Activated CD4-positive, alpha-beta T cell treated with anti-CD3 and anti-CD28 coated beads for 36 hours (primary cell): ENCODE measurements at regions of chr12 and their contacts with region 1.

Region 1: GRCh38 chr12:57031138-57031725 is 14.9 kb upstream of the TAC3 start:
- DNase-seq: peak; percentile 44
- ATAC-seq: peak; percentile 43
- H3K4me3 Mint-ChIP-seq: no peak overlapping the region
- H3K27ac Mint-ChIP-seq: peak overlapping the region; percentile 55
- H3K4me1 Mint-ChIP-seq: peaks cover 46% of the 10 kb centered on the region
- H3K27me3 Mint-ChIP-seq: no peaks in the 10 kb centered on the region

Region 2: DNA sequence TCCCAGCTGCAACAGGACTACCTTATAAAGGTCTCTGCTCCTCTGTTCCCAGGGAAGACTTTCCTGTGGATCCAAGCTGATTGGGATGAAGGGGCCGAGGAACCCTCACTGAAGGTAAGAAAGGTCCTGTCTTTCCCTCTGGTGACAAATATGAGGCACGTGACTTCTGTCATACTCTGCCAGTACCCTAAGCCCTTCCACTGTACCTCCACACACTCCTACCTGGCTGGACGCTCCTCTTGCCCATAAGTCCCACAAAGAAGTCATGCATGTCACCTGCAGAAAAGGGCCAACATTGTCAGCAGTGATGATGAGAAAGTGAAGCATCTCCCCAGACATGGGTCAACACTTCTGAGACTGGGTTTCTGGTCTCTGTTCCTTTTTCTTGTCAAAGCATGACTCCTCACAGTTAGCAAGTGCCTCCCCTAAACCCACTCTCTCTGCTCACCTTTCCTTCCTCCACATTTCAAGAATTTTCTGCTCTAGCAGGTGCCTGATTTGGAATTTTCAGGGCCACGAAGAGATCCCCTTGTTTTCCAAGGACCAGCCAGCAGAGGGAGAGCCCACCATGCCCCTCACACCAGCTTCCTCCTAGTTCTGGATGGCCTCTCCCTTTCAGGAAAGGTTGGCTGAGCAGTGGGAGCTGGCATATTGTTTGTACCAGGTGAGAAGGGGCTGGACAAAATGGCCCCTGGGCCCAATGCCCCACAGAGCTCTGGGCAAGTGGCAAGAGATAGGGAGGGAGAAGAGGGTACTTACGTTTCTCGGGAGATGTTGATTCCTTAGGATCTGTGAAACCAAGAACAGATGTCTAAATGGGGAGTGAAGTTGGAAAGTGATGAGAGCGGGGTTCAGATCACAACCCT is 18.4 kb before region 1 on chr12:
- CTCF ChIA-PET with region 1: interaction called, 12 read pairs
- POLR2A ChIA-PET with region 1: no interaction called
- intact Hi-C with region 1: no loop called
- DNase-seq: no peak
- ATAC-seq: no peak
- H3K4me3 Mint-ChIP-seq: no peak overlapping the region
- H3K27ac Mint-ChIP-seq: peak overlapping the region; percentile 56
- H3K4me1 Mint-ChIP-seq: peaks cover 41% of the 10 kb centered on the region
- H3K27me3 Mint-ChIP-seq: no peaks in the 10 kb centered on the region

Region 3: GRCh38 chr12:57019983-57020719 is 11.1 kb before region 1 on chr12:
- CTCF ChIA-PET with region 1: interaction called, 10 read pairs
- POLR2A ChIA-PET with region 1: interaction called, 3 read pairs
- intact Hi-C with region 1: no loop called
- DNase-seq: no peak
- ATAC-seq: no peak
- H3K4me3 Mint-ChIP-seq: no peak overlapping the region
- H3K27ac Mint-ChIP-seq: peak overlapping the region; percentile 60
- H3K4me1 Mint-ChIP-seq: peaks cover 18% of the 10 kb centered on the region
- H3K27me3 Mint-ChIP-seq: no peaks in the 10 kb centered on the region